ENCODE measurements at regions of chr3 and their contacts with region 1.

Region 1: GRCh38 chr3:184561061-184561912 is at the start of gene EPHB3:
- DNase-seq: peak; percentile 84 to 94 (median 86)
- ATAC-seq: peak; percentile 81
- H3K4me3 ChIP-seq: peak within 1 kb of the TSS; percentile 53
- H3K4me3 Mint-ChIP-seq: peak within 1 kb of the TSS; percentile 72
- H3K27ac ChIP-seq: no peak within 1 kb of the TSS
- H3K27ac Mint-ChIP-seq: peak within 1 kb of the TSS; percentile 50
- H3K4me1 ChIP-seq: peaks cover 61% of the 10 kb centered on the region
- H3K4me1 Mint-ChIP-seq: peaks cover 49% of the 10 kb centered on the region
- H3K27me3 ChIP-seq: peaks cover 18 to 42% of the 10 kb centered on the region in 2 experiments
- H3K27me3 Mint-ChIP-seq: peaks cover 41% of the 10 kb centered on the region
- CTCF ChIP-seq: peak; percentile 99
- total RNA-seq, gene EPHB3: 0.19 to 0.22 TPM

Region 2: DNA sequence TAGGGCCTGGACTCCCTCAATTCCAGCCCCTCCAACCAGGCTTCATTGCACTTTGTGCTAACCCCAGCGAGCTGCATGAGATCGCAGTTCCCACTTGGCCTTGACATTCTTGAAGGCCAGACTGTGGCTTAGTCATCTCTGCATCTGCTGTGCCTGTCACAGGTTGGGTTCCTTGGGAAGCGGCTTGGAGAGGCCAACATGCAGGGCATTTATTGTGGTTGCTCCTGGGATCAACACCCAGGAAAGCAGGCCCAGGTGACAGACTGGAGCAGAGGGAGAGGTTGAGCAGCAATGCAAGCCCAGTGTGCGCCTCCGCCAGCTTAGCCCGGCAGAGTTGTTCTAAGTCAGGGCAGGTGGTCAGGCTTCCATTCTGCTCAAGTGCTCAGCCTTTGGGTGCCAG is 364.8 kb before region 1 on chr3:
- CTCF ChIA-PET with region 1: no interaction called
- POLR2A ChIA-PET with region 1: no interaction called
- intact Hi-C with region 1: no loop called
- DNase-seq: no peak
- ATAC-seq: no peak
- H3K4me3 ChIP-seq: no peak overlapping the region
- H3K4me3 Mint-ChIP-seq: no peak overlapping the region
- H3K27ac ChIP-seq: no peak overlapping the region
- H3K27ac Mint-ChIP-seq: no peak overlapping the region
- H3K4me1 ChIP-seq: no peaks in the 10 kb centered on the region
- H3K4me1 Mint-ChIP-seq: no peaks in the 10 kb centered on the region
- H3K27me3 ChIP-seq: no peaks in the 10 kb centered on the region
- H3K27me3 Mint-ChIP-seq: no peaks in the 10 kb centered on the region
- CTCF ChIP-seq: no peak

Region 3: DNA sequence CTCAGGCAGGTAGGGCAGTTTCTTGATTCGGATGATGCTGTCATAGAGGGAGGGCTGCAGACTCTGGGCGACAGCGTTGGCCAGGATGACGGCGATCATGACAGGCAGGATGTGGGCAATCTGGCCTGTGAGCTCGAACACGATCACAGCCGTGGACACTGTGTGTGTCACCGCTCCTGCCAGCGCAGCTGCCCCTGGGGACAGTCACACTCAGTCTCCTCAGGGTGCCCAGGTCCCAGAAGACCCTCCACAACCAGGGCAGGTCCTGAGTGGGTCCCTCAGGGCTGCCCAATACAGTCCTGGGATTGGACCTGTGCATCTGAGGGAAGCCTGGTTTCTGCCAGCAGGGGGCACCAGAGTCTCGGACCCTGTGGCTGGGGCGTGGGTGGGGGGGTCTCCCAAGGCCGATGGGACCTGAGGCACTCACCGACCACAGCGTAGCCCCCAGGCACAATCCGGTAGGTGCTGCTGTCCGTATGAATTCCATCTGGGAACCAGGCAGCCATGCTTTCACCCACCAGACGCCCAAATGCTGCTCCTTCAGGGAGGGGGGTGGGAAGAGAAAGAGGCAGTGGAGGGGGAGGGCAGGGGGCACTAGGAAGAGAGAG is 207.1 kb before region 1 on chr3:
- CTCF ChIA-PET with region 1: no interaction called
- POLR2A ChIA-PET with region 1: no interaction called
- intact Hi-C with region 1: no loop called
- DNase-seq: peak; percentile 44 to 82 (median 57)
- ATAC-seq: peak; percentile 72
- H3K4me3 ChIP-seq: no peak overlapping the region
- H3K4me3 Mint-ChIP-seq: no peak overlapping the region
- H3K27ac ChIP-seq: no peak overlapping the region
- H3K27ac Mint-ChIP-seq: no peak overlapping the region
- H3K4me1 ChIP-seq: peaks cover 8% of the 10 kb centered on the region
- H3K4me1 Mint-ChIP-seq: no peaks in the 10 kb centered on the region
- H3K27me3 ChIP-seq: no peaks in the 10 kb centered on the region
- H3K27me3 Mint-ChIP-seq: no peaks in the 10 kb centered on the region
- CTCF ChIP-seq: peak; percentile 74

Region 4: DNA sequence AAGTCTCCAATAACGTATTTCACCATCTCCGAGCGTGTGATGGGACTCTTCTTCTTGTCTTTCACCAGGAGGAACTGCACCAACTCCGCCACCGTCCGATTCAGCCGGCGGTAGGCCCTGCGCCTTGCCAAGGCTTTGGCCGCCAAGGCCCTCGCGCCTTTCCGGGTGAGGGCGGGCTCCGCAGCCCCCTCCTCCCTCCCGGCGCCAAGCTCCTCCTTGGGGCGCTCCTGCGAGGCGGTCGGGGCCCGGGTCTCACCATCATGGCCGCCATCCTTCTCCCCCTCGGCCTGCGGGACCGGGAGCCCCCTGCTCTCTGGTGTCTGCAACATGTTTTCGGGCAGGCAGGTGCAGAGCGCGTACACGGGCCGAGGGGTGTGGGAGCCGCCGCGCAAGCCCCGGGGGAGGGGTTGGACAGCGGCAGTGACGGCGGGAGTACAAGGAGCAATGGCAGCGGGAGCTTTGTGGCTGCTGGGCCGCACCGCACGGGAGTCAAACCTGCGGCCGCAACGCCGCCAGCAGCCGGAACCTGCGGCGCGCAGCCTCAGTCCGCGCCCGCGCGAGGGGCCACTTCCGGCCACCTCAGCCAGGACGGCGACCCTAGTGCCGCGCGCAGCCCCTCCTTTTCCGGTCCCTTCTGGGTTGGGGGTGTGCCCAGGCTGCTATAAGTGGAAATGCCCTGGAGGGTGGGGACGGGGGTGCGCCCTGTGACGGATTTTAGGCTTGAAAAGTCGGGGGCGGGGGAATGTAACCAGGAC is 150.4 kb after region 1 on chr3 and contains the start of gene MAGEF1:
- CTCF ChIA-PET with region 1: interaction called, 6 read pairs
- POLR2A ChIA-PET with region 1: interaction called, 10 read pairs
- intact Hi-C with region 1: no loop called
- DNase-seq: peak; percentile 37 to 86 (median 68)
- ATAC-seq: peak; percentile 78
- H3K4me3 ChIP-seq: peak within 1 kb of the TSS; percentile 87
- H3K4me3 Mint-ChIP-seq: peak within 1 kb of the TSS; percentile 93
- H3K27ac ChIP-seq: peak within 1 kb of the TSS; percentile 72 to 80
- H3K27ac Mint-ChIP-seq: peak within 1 kb of the TSS; percentile 77
- H3K4me1 ChIP-seq: peaks cover 25% of the 10 kb centered on the region
- H3K4me1 Mint-ChIP-seq: peaks cover 26% of the 10 kb centered on the region
- H3K27me3 ChIP-seq: no peaks in the 10 kb centered on the region
- H3K27me3 Mint-ChIP-seq: no peaks in the 10 kb centered on the region
- CTCF ChIP-seq: no peak
- total RNA-seq, gene MAGEF1: 5.8 to 6.1 TPM

Region 5: GRCh38 chr3:184727357-184728009 is 166.2 kb after region 1 on chr3:
- CTCF ChIA-PET with region 1: interaction called, 5 read pairs
- POLR2A ChIA-PET with region 1: interaction called, 4 read pairs
- intact Hi-C with region 1: loop called (anchors 1 kb)
- DNase-seq: peak in 13 of 14 experiments; percentile 6 to 76 (median 24)
- ATAC-seq: peak; percentile 75
- H3K4me3 ChIP-seq: no peak overlapping the region
- H3K4me3 Mint-ChIP-seq: no peak overlapping the region
- H3K27ac ChIP-seq: no peak overlapping the region
- H3K27ac Mint-ChIP-seq: no peak overlapping the region
- H3K4me1 ChIP-seq: no peaks in the 10 kb centered on the region
- H3K4me1 Mint-ChIP-seq: no peaks in the 10 kb centered on the region
- H3K27me3 ChIP-seq: peaks cover 0 to 2% of the 10 kb centered on the region in 2 experiments
- H3K27me3 Mint-ChIP-seq: peaks cover 3% of the 10 kb centered on the region
- CTCF ChIP-seq: peak; percentile 78

Region 6: GRCh38 chr3:184811999-184812661 is 250.8 kb after region 1 on chr3 and contains the start of gene VPS8:
- CTCF ChIA-PET with region 1: interaction called, 10 read pairs
- POLR2A ChIA-PET with region 1: no interaction called
- intact Hi-C with region 1: no loop called
- DNase-seq: peak; percentile 91 to 98 (median 96)
- ATAC-seq: peak; percentile 85
- H3K4me3 ChIP-seq: peak within 1 kb of the TSS; percentile 84
- H3K4me3 Mint-ChIP-seq: peak within 1 kb of the TSS; percentile 95
- H3K27ac ChIP-seq: peak within 1 kb of the TSS; percentile 86 to 87
- H3K27ac Mint-ChIP-seq: peak within 1 kb of the TSS; percentile 90
- H3K4me1 ChIP-seq: peaks cover 28% of the 10 kb centered on the region
- H3K4me1 Mint-ChIP-seq: peaks cover 59% of the 10 kb centered on the region
- H3K27me3 ChIP-seq: no peaks in the 10 kb centered on the region
- H3K27me3 Mint-ChIP-seq: no peaks in the 10 kb centered on the region
- CTCF ChIP-seq: peak; percentile 64
- total RNA-seq, gene VPS8: 56.8 to 61.2 TPM

Measured in CD4-positive, alpha-beta T cell (primary cell).